Activated CD4-positive, alpha-beta T cell treated with anti-CD3 and anti-CD28 coated beads, Interleukin-2, amount 10 ng/mL, durations not matched to agents 24 days and 14 days (primary cell): ENCODE measurements at regions of chr2 and their contacts with region 1.

Region 1: DNA sequence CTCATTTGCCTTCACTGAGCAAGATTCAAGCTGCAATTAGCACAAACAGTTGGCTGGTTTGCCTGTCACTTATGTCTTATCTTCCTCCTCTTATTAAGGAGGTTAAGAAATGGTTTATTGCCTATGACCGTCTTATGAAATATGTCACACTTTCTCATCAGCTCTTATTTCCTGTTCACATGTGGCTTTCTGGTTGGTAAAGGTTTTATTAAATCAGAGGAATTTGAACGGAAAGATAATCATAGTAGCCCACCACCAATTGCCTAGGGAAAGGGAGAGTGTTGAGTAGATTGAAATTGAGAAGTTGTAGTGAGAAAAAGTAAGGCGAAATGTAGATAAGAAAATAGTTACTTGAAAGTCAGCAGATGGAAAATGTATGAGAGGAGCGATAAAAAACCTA is 4.2 kb upstream of the IL1R1 start:
- DNase-seq: no peak
- H3K4me3 Mint-ChIP-seq: no peak overlapping the region
- H3K27ac Mint-ChIP-seq: peak overlapping the region; percentile 1
- H3K4me1 Mint-ChIP-seq: peaks cover 24% of the 10 kb centered on the region
- H3K27me3 Mint-ChIP-seq: peaks cover 31% of the 10 kb centered on the region

Region 2: GRCh38 chr2:102103992-102104871 is 34.1 kb before region 1 on chr2:
- intact Hi-C with region 1: loop called (anchors 2 kb)
- DNase-seq: peak; percentile 76
- H3K4me3 Mint-ChIP-seq: peak overlapping the region; percentile 79
- H3K27ac Mint-ChIP-seq: peak overlapping the region; percentile 14
- H3K4me1 Mint-ChIP-seq: peaks cover 22% of the 10 kb centered on the region
- H3K27me3 Mint-ChIP-seq: peaks cover 35% of the 10 kb centered on the region